H1 (cell line): ENCODE measurements at regions of chr6 and their contacts with region 1.

Region 1: GRCh38 chr6:168302534-168302933 is 17.0 kb downstream of the DACT2 start:
- DNase-seq: peak in 1 of 2 experiments; percentile 44
- H3K4me3 ChIP-seq: no peak overlapping the region
- H3K27ac ChIP-seq: no peak overlapping the region
- H3K4me1 ChIP-seq: peaks cover 4 to 14% (median 8%) of the 10 kb centered on the region in 4 experiments
- H3K27me3 ChIP-seq: peaks cover 0 to 14% (median 9%) of the 10 kb centered on the region in 4 experiments; a peak in 6 of 7 replicates
- CTCF ChIP-seq: no peak
- EP300 ChIP-seq: no peak
- POLR2A ChIP-seq: no peak
- RAD21 ChIP-seq: no peak

Region 2: GRCh38 chr6:168289179-168289962 is 13.2 kb before region 1 on chr6:
- CTCF ChIA-PET with region 1: interaction called, 12 read pairs
- POLR2A ChIA-PET with region 1: interaction called, 3 read pairs
- DNase-seq: no peak
- H3K4me3 ChIP-seq: no peak overlapping the region
- H3K27ac ChIP-seq: no peak overlapping the region
- H3K4me1 ChIP-seq: no peaks in the 10 kb centered on the region
- H3K27me3 ChIP-seq: no peaks in the 10 kb centered on the region; a peak in 1 of 7 replicates
- CTCF ChIP-seq: no peak
- EP300 ChIP-seq: no peak
- POLR2A ChIP-seq: no peak
- RAD21 ChIP-seq: no peak